Activated CD4-positive, alpha-beta T cell treated with anti-CD3 and anti-CD28 coated beads for 36 hours (primary cell): ENCODE measurements at regions of chr4 and their contacts with region 1.

Region 1: DNA sequence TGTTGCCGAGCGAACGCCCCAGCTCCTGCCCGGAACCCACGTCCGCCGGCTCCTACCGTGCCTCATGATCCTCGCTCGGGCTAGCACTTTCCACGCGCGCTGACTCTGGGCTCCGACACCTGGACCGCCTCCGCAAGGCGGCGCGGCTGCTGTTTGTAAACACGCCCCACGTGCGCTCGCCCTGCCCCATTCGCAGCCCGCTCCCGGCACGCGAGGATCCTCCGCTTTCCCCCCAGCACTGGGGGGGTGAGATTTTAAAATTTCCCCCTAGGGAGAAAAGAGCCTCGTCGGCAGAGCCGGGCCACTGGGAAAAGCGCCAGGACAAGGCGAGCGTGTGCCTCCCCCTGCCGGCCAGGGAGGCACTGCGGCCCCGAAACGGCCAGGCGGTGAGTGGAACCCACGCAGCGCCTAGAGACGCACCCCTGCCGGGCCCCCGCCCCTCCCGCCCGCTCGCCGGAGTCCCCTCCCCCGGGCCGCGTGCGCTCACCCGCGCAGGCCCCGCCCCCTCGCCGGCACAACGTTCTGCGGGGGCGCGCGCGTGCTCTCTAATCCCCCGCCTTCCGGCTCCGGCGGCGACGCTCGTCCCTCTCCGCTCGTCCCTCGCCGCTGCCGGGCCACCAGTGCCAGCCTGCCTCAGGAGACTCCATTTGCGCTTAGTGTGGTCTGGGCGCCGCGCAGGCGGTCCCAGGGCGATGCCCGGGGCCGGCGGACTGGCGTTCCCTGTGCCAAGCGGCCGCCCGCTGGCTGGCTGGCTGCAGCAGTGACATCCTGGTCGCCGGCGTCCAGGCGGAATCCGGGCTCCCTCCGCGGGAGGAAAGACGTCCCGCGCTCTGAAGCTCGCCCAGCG is at the start of gene TIGD2:
- DNase-seq: peak; percentile 93
- ATAC-seq: peak; percentile 95
- H3K4me3 Mint-ChIP-seq: peak within 1 kb of the TSS; percentile 73
- H3K27ac Mint-ChIP-seq: peak within 1 kb of the TSS; percentile 86
- H3K4me1 Mint-ChIP-seq: peaks cover 18% of the 10 kb centered on the region
- H3K27me3 Mint-ChIP-seq: peaks cover 16% of the 10 kb centered on the region
- total RNA-seq, gene TIGD2: 2.1 to 2.3 TPM

Region 2: DNA sequence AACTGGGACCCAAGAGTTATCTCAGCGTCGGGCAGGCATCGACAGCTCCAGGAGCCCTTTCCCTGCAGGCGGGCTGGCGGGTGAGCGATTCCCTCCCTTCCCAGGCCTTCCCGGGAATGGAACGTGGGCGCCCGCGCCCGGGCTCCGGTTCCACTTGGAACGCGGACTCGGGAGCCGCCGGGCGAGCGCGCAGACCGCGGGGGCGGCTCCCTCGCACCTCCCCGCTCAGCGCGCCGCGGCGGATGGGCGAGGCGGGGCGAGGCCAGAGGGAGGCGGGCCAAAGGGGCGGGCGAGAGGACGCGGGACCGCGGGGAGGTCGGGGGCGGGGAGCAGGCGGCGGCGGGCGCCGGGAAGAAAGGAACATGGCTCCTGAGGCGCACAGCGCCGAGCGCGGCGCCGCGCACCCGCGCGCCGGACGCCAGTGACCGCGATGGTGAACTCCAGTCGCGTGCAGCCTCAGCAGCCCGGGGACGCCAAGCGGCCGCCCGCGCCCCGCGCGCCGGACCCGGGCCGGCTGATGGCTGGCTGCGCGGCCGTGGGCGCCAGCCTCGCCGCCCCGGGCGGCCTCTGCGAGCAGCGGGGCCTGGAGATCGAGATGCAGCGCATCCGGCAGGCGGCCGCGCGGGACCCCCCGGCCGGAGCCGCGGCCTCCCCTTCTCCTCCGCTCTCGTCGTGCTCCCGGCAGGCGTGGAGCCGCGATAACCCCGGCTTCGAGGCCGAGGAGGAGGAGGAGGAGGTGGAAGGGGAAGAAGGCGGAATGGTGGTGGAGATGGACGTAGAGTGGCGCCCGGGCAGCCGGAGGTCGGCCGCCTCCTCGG is 1103.7 kb before region 1 on chr4 and contains the start of gene PKD2:
- CTCF ChIA-PET with region 1: no interaction called
- POLR2A ChIA-PET with region 1: no interaction called
- intact Hi-C with region 1: loop called in 1 of 2 experiments (anchors 5 kb)
- DNase-seq: peak; percentile 89
- ATAC-seq: peak; percentile 92
- H3K4me3 Mint-ChIP-seq: peak within 1 kb of the TSS; percentile 84
- H3K27ac Mint-ChIP-seq: peak within 1 kb of the TSS; percentile 72
- H3K4me1 Mint-ChIP-seq: peaks cover 32% of the 10 kb centered on the region
- H3K27me3 Mint-ChIP-seq: peaks cover 5% of the 10 kb centered on the region
- total RNA-seq, gene PKD2: 4.1 to 5.0 TPM

Region 3: DNA sequence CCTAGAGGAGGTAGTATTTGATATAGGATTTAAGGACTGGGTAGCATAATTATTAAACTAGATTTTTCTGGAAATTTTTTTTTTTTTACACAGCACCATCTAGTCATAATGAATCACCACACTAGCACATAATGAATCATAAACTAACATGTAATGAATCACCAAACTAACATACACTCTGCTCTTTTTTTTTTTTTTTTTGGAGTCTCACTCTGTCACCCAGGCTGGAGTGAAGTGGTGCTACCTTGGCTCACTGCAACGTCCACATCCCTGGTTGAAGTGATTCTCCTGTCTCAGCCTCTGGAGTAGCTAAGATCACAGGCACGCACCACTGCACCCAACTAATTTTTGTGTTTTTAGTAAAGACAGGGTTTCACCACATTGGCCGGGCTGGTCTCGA is 146.8 kb before region 1 on chr4:
- CTCF ChIA-PET with region 1: no interaction called
- POLR2A ChIA-PET with region 1: no interaction called
- intact Hi-C with region 1: loop called in 1 of 2 experiments (anchors 5 kb)
- DNase-seq: peak; percentile 26
- ATAC-seq: peak; percentile 92
- H3K4me3 Mint-ChIP-seq: no peak overlapping the region
- H3K27ac Mint-ChIP-seq: no peak overlapping the region
- H3K4me1 Mint-ChIP-seq: peaks cover 11% of the 10 kb centered on the region
- H3K27me3 Mint-ChIP-seq: peaks cover 2% of the 10 kb centered on the region